Activated T-helper 1 cell treated with anti-CD3 and anti-CD28 coated beads, Interleukin-12 subunit alpha, Interleukin-12 subunit beta, Interleukin-2, Interleukin-4 antibody, amounts not matched to agents 30 ng/mL and 10 ng/mL and 1 ng/mL, durations not matched to agents 14 hours and 24 hours and 36 hours (primary cell): ENCODE measurements at regions of chr12 and their contacts with region 1.

Region 1: GRCh38 chr12:64890873-64891468 is 66.5 kb downstream of the TBC1D30 start:
- DNase-seq: no peak
- H3K4me3 Mint-ChIP-seq: no peak overlapping the region
- H3K27ac Mint-ChIP-seq: no peak overlapping the region
- H3K4me1 Mint-ChIP-seq: no peaks in the 10 kb centered on the region
- H3K27me3 Mint-ChIP-seq: peaks cover 1% of the 10 kb centered on the region

Region 2: GRCh38 chr12:65121049-65121955 is 230.3 kb after region 1 on chr12 and contains the start of gene WIF1:
- intact Hi-C with region 1: loop called (anchors 1 kb)
- DNase-seq: no peak
- H3K4me3 Mint-ChIP-seq: peak within 1 kb of the TSS; percentile 46
- H3K27ac Mint-ChIP-seq: no peak within 1 kb of the TSS
- H3K4me1 Mint-ChIP-seq: no peaks in the 10 kb centered on the region
- H3K27me3 Mint-ChIP-seq: peaks cover 30% of the 10 kb centered on the region
- total RNA-seq, gene WIF1: not detected in 2 replicates

Region 3: GRCh38 chr12:65313719-65314317 is 422.8 kb after region 1 on chr12:
- intact Hi-C with region 1: loop called (anchors 10 kb)
- DNase-seq: no peak
- H3K4me3 Mint-ChIP-seq: no peak overlapping the region
- H3K27ac Mint-ChIP-seq: no peak overlapping the region
- H3K4me1 Mint-ChIP-seq: no peaks in the 10 kb centered on the region
- H3K27me3 Mint-ChIP-seq: peaks cover 5% of the 10 kb centered on the region

Region 4: GRCh38 chr12:66107451-66107915 is 1216.5 kb after region 1 on chr12:
- intact Hi-C with region 1: loop called (anchors 1 kb)
- DNase-seq: peak; percentile 43
- H3K4me3 Mint-ChIP-seq: no peak overlapping the region
- H3K27ac Mint-ChIP-seq: no peak overlapping the region
- H3K4me1 Mint-ChIP-seq: peaks cover 16% of the 10 kb centered on the region
- H3K27me3 Mint-ChIP-seq: peaks cover 14% of the 10 kb centered on the region